CD4-positive, alpha-beta T cell (primary cell): ENCODE measurements at regions of chr15 and their contacts with region 1.

Region 1: DNA sequence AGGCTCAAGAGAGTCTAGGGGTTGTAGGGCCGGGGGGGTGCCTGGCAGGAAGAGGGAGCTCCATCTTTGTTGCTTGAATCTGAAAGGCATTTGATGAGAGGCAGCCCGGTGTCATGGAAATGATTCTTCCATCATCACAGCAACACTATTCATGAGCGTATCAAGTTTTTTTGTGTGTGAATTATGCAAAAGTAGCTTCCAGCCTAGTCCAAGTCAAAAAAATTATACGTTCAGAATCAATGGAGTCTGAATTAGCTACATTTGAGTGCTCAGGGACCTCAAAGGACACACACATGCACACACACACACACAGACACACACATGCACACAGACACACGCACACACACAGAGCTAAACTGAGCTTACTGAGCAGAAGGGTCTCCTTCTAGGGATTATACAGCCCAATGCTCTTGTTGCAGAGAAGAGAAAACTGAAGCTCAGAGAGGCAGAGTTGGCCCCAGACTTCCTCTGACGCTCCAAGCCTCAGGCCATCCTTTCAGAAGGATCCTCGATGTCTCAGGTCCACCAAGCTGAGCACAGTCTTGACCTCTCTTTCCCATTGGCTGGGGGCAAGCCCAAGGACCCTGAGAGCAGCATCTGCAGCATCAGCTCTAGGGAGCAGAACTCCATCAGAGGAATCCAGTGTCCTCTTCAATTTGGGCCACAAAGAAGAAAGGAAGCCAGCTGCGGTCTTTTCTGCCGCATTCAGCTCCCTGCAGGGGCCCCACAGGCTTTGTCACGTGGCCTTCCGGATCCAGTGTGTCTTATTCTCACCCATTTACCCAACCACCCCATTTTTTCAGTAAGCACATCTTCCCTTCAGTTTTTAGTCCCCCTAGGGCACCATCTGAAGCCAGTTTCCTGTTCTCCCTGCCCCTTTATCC is 228.0 kb downstream of the UACA start:
- DNase-seq: peak; percentile 35 to 84 (median 58)
- ATAC-seq: peak; percentile 76
- H3K4me3 ChIP-seq: peak overlapping the region; percentile 61
- H3K4me3 Mint-ChIP-seq: peak overlapping the region; percentile 93
- H3K27ac ChIP-seq: peak overlapping the region; percentile 65
- H3K27ac Mint-ChIP-seq: peak overlapping the region; percentile 98
- H3K4me1 ChIP-seq: peaks cover 69% of the 10 kb centered on the region
- H3K4me1 Mint-ChIP-seq: peaks cover 78% of the 10 kb centered on the region
- H3K27me3 ChIP-seq: no peaks in the 10 kb centered on the region
- H3K27me3 Mint-ChIP-seq: no peaks in the 10 kb centered on the region
- CTCF ChIP-seq: no peak

Region 2: GRCh38 chr15:69468241-69469121 is 1066.8 kb before region 1 on chr15:
- CTCF ChIA-PET with region 1: no interaction called
- POLR2A ChIA-PET with region 1: interaction called, 10 read pairs
- intact Hi-C with region 1: no loop called
- DNase-seq: peak; percentile 74 to 97 (median 81)
- ATAC-seq: peak; percentile 88
- H3K4me3 ChIP-seq: peak overlapping the region; percentile 15
- H3K4me3 Mint-ChIP-seq: peak overlapping the region; percentile 70
- H3K27ac ChIP-seq: peak overlapping the region; percentile 91
- H3K27ac Mint-ChIP-seq: peak overlapping the region; percentile 90
- H3K4me1 ChIP-seq: peaks cover 39% of the 10 kb centered on the region
- H3K4me1 Mint-ChIP-seq: peaks cover 29% of the 10 kb centered on the region
- H3K27me3 ChIP-seq: no peaks in the 10 kb centered on the region
- H3K27me3 Mint-ChIP-seq: no peaks in the 10 kb centered on the region
- CTCF ChIP-seq: no peak

Region 3: GRCh38 chr15:70504299-70504951 is 30.9 kb before region 1 on chr15:
- CTCF ChIA-PET with region 1: no interaction called
- POLR2A ChIA-PET with region 1: interaction called, 28 read pairs
- intact Hi-C with region 1: no loop called
- DNase-seq: peak in 5 of 14 experiments; percentile 10 to 71 (median 54)
- ATAC-seq: peak; percentile 27
- H3K4me3 ChIP-seq: no peak overlapping the region
- H3K4me3 Mint-ChIP-seq: peak overlapping the region; percentile 48
- H3K27ac ChIP-seq: no peak overlapping the region
- H3K27ac Mint-ChIP-seq: no peak overlapping the region
- H3K4me1 ChIP-seq: peaks cover 70% of the 10 kb centered on the region
- H3K4me1 Mint-ChIP-seq: peaks cover 70% of the 10 kb centered on the region
- H3K27me3 ChIP-seq: no peaks in the 10 kb centered on the region
- H3K27me3 Mint-ChIP-seq: no peaks in the 10 kb centered on the region
- CTCF ChIP-seq: no peak

Region 4: GRCh38 chr15:70521576-70522322 is 13.6 kb before region 1 on chr15:
- CTCF ChIA-PET with region 1: no interaction called
- POLR2A ChIA-PET with region 1: interaction called, 11 read pairs
- intact Hi-C with region 1: loop called in 1 of 2 experiments (anchors 2 kb)
- DNase-seq: no peak
- ATAC-seq: no peak
- H3K4me3 ChIP-seq: no peak overlapping the region
- H3K4me3 Mint-ChIP-seq: no peak overlapping the region
- H3K27ac ChIP-seq: no peak overlapping the region
- H3K27ac Mint-ChIP-seq: no peak overlapping the region
- H3K4me1 ChIP-seq: peaks cover 9% of the 10 kb centered on the region
- H3K4me1 Mint-ChIP-seq: peaks cover 31% of the 10 kb centered on the region
- H3K27me3 ChIP-seq: no peaks in the 10 kb centered on the region
- H3K27me3 Mint-ChIP-seq: no peaks in the 10 kb centered on the region
- CTCF ChIP-seq: no peak

Region 5: DNA sequence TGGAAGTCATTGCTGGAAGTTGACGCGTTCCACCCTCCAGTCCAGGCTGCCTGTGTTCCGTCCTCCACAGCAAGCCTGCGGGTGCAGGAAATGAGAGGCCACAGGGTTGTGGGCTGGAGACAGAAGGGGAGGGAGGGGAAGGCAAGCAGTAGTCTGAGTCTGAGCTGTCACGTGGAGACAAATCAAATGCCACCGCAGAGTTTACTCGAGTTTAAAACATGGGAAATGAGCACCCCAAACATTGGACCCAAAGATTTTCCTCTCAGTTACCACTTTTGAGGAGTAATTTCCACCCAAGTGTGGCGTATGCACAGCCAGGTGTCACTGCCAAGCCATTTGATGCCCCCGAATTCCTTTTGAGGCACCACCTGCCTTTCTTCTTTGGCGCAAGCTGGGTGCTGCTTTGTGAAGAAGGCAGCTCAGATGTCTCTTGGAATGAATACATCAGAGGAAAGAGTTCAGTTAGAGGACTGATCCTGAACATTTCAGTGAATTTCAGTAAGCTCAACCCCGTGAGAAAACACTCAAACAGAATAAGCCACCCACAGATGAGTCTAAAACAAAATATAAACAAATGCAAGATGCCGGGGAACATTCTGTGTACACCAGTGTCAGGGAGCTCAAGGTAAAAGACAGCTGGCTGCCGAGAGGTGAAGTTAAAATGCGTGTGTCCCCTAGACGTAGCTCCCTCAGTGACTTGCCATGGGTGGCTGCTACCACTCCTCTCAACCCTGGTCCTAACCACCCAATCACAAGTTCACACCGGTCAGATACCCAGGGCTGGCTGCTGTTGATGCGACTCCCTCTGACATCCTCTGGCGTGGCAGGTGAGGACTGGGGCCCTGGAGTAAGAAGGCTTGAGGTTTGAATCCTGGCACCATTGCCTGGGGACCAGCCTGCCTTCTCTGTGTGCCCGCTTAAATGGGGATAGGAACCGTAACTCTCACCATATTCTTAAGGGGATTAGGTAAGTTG is 24.2 kb after region 1 on chr15:
- CTCF ChIA-PET with region 1: no interaction called
- POLR2A ChIA-PET with region 1: interaction called, 83 read pairs
- intact Hi-C with region 1: loop called in 1 of 2 experiments (anchors 1 kb)
- DNase-seq: peak; percentile 56 to 87 (median 66)
- ATAC-seq: peak; percentile 82
- H3K4me3 ChIP-seq: peak overlapping the region; percentile 53
- H3K4me3 Mint-ChIP-seq: no peak overlapping the region
- H3K27ac ChIP-seq: peak overlapping the region; percentile 16 to 42
- H3K27ac Mint-ChIP-seq: no peak overlapping the region
- H3K4me1 ChIP-seq: peaks cover 69% of the 10 kb centered on the region
- H3K4me1 Mint-ChIP-seq: peaks cover 4% of the 10 kb centered on the region
- H3K27me3 ChIP-seq: no peaks in the 10 kb centered on the region
- H3K27me3 Mint-ChIP-seq: no peaks in the 10 kb centered on the region
- CTCF ChIP-seq: no peak

Region 6: DNA sequence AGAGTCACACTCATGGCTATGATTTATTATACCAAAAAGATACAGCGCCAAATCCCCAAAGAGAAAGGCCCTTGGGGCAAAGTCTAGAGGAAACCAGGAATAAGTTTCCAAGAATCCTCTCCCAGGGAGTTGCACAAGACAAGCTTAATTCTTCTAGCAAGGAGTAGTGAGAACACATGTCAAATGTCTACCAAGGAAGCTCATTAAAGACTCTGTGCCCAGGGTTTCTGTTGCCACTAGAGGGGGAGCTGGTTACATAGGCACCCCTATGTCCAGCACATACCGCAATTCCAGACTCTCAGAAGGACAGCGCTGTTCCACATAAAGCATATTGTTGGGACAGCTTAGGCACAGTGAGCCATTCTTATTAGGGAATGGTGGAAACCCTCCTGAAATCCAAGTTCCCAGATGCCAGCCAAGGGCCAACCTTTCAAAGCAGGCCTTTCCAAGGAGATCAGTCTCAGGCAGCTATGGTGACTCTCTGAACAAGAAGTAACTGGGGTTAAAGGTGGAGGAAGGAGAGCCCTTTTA is 33.8 kb after region 1 on chr15:
- CTCF ChIA-PET with region 1: no interaction called
- POLR2A ChIA-PET with region 1: interaction called, 4 read pairs
- intact Hi-C with region 1: loop called in 1 of 2 experiments (anchors 5 kb)
- DNase-seq: no peak
- ATAC-seq: no peak
- H3K4me3 ChIP-seq: no peak overlapping the region
- H3K4me3 Mint-ChIP-seq: no peak overlapping the region
- H3K27ac ChIP-seq: no peak overlapping the region
- H3K27ac Mint-ChIP-seq: no peak overlapping the region
- H3K4me1 ChIP-seq: no peaks in the 10 kb centered on the region
- H3K4me1 Mint-ChIP-seq: no peaks in the 10 kb centered on the region
- H3K27me3 ChIP-seq: no peaks in the 10 kb centered on the region
- H3K27me3 Mint-ChIP-seq: no peaks in the 10 kb centered on the region
- CTCF ChIP-seq: no peak

Region 7: GRCh38 chr15:70584838-70585706 is 49.8 kb after region 1 on chr15:
- CTCF ChIA-PET with region 1: no interaction called
- POLR2A ChIA-PET with region 1: interaction called, 5 read pairs
- intact Hi-C with region 1: loop called in 1 of 2 experiments (anchors 2 kb)
- DNase-seq: peak; percentile 24 to 73 (median 46)
- ATAC-seq: peak; percentile 86
- H3K4me3 ChIP-seq: no peak overlapping the region
- H3K4me3 Mint-ChIP-seq: peak overlapping the region; percentile 68
- H3K27ac ChIP-seq: no peak overlapping the region
- H3K27ac Mint-ChIP-seq: no peak overlapping the region
- H3K4me1 ChIP-seq: peaks cover 16% of the 10 kb centered on the region
- H3K4me1 Mint-ChIP-seq: peaks cover 21% of the 10 kb centered on the region
- H3K27me3 ChIP-seq: peaks cover 0 to 5% of the 10 kb centered on the region in 2 experiments
- H3K27me3 Mint-ChIP-seq: peaks cover 15% of the 10 kb centered on the region
- CTCF ChIP-seq: peak; percentile 76

Region 8: GRCh38 chr15:70964058-70964457 is 428.7 kb after region 1 on chr15:
- CTCF ChIA-PET with region 1: no interaction called
- POLR2A ChIA-PET with region 1: no interaction called
- intact Hi-C with region 1: no loop called
- DNase-seq: no peak
- ATAC-seq: no peak
- H3K4me3 ChIP-seq: no peak overlapping the region
- H3K4me3 Mint-ChIP-seq: no peak overlapping the region
- H3K27ac ChIP-seq: no peak overlapping the region
- H3K27ac Mint-ChIP-seq: no peak overlapping the region
- H3K4me1 ChIP-seq: no peaks in the 10 kb centered on the region
- H3K4me1 Mint-ChIP-seq: no peaks in the 10 kb centered on the region
- H3K27me3 ChIP-seq: no peaks in the 10 kb centered on the region
- H3K27me3 Mint-ChIP-seq: peaks cover 12% of the 10 kb centered on the region
- CTCF ChIP-seq: no peak